ENCODE measurements at regions of chr14 and their contacts with region 1.

Region 1: GRCh38 chr14:91021991-91022621 is 38.3 kb downstream of the RPS6KA5 start:
- DNase-seq: no peak
- ATAC-seq: peak; percentile 52
- H3K4me3 Mint-ChIP-seq: peak overlapping the region; percentile 53
- H3K27ac Mint-ChIP-seq: peak overlapping the region; percentile 81
- H3K4me1 Mint-ChIP-seq: peaks cover 36% of the 10 kb centered on the region
- H3K27me3 Mint-ChIP-seq: no peaks in the 10 kb centered on the region

Region 2: GRCh38 chr14:91038438-91038837 is 16.3 kb after region 1 on chr14:
- CTCF ChIA-PET with region 1: no interaction called
- POLR2A ChIA-PET with region 1: no interaction called
- intact Hi-C with region 1: loop called in 1 of 2 experiments (anchors 2 kb)
- DNase-seq: peak; percentile 24
- ATAC-seq: peak; percentile 41
- H3K4me3 Mint-ChIP-seq: no peak overlapping the region
- H3K27ac Mint-ChIP-seq: peak overlapping the region; percentile 49
- H3K4me1 Mint-ChIP-seq: peaks cover 64% of the 10 kb centered on the region
- H3K27me3 Mint-ChIP-seq: no peaks in the 10 kb centered on the region

Region 3: GRCh38 chr14:91114079-91115065 is 92.3 kb after region 1 on chr14:
- CTCF ChIA-PET with region 1: interaction called, 4 read pairs
- POLR2A ChIA-PET with region 1: no interaction called
- intact Hi-C with region 1: loop called in 1 of 2 experiments (anchors 1 kb)
- DNase-seq: peak; percentile 82
- ATAC-seq: peak; percentile 82
- H3K4me3 Mint-ChIP-seq: peak overlapping the region; percentile 99
- H3K27ac Mint-ChIP-seq: peak overlapping the region; percentile 99
- H3K4me1 Mint-ChIP-seq: peaks cover 70% of the 10 kb centered on the region
- H3K27me3 Mint-ChIP-seq: no peaks in the 10 kb centered on the region

Region 4: GRCh38 chr14:92540472-92541053 is 1518.5 kb after region 1 on chr14:
- CTCF ChIA-PET with region 1: no interaction called
- POLR2A ChIA-PET with region 1: no interaction called
- intact Hi-C with region 1: no loop called
- DNase-seq: no peak
- ATAC-seq: peak; percentile 31
- H3K4me3 Mint-ChIP-seq: no peak overlapping the region
- H3K27ac Mint-ChIP-seq: peak overlapping the region; percentile 4
- H3K4me1 Mint-ChIP-seq: peaks cover 45% of the 10 kb centered on the region
- H3K27me3 Mint-ChIP-seq: no peaks in the 10 kb centered on the region

Measured in activated CD4-positive, alpha-beta T cell treated with anti-CD3 and anti-CD28 coated beads for 36 hours (primary cell).